ENCODE measurements at regions of chr5 and their contacts with region 1.

Region 1: DNA sequence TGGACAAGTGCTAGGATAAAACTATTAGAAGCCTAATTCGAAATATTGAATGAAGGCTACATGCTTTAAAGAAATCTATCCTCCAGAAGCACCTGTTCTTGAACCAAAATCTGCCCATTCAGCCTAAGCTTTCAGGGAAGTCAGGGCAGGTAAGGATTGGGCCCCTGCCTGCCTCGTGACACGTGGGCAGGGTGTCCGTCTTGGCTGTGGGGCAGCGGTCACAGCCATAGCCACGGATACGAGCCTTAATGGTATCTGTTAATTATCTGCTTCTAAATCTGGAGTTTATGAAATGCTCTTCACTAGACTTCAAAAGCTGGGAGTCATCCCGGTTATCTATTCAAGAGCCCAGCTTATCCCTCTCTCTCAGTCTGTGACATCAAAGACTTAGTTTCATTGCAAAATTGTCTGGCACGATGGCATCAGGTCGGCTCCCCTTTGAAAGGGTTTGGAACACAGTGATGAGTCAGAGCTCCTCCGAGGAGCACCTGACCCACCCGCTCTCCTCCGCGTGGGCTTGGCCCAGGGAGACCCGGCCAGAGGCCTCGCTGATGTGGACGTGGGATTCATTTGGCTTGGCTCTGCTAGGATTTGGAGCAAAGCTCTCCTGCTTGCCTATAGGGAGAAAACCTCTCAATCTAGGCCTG is 135.9 kb downstream of the MACROH2A1 start:
- DNase-seq: peak; percentile 98
- ATAC-seq: peak; percentile 88
- H3K4me3 ChIP-seq: peak overlapping the region; percentile 11 to 60 (median 54); a peak in 5 of 6 replicates
- H3K27ac ChIP-seq: peak overlapping the region; percentile 68
- H3K4me1 ChIP-seq: peaks cover 52% of the 10 kb centered on the region
- H3K27me3 ChIP-seq: no peaks in the 10 kb centered on the region
- CTCF ChIP-seq: no peak
- EP300 ChIP-seq: peak; percentile 89 to 96; a peak in 3 of 4 replicates
- POLR2A ChIP-seq: peak in 1 of 2 experiments; percentile 94; a peak in 2 of 4 replicates
- RAD21 ChIP-seq: no peak

Region 2: DNA sequence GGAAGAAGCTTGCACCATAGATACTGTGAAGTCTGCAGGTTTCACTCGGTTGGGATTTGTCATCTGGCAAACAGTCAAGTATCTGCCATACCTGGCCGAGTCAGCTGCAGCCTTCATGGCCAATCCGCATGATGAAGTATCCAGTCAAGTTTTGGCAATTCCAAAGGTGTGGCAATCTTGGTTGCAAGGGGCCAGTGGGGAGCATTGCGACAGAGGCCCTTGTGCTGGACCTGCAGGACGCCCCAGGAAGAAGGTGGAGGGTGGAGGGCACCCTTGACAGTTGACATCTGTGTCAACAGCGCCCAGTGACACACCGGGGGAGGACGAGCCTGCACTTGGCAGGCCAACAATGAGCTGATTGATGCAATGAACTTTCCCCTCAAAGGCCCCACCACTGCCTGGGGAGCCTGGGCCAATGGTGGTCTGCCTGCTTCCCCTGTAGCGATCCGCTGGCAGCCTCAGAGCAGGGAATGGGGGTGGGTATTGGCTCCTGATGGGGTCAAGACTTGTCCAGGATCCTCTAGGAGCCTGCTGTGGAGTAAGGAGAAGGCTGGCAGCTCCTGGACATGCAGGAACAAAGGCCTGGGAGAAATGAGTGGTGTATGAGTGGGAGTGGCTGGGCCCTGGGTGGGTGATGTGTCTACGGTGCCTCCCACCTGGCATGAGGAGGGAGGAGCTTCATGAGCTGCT is 106.3 kb before region 1 on chr5:
- CTCF ChIA-PET with region 1: no interaction called
- POLR2A ChIA-PET with region 1: interaction called, 13 read pairs
- in situ Hi-C with region 1: no loop called
- intact Hi-C with region 1: no loop called
- DNase-seq: peak; percentile 98
- ATAC-seq: peak; percentile 95
- H3K4me3 ChIP-seq: peak overlapping the region; percentile 24 to 68 (median 25); a peak in 5 of 6 replicates
- H3K27ac ChIP-seq: peak overlapping the region; percentile 97
- H3K4me1 ChIP-seq: peaks cover 79% of the 10 kb centered on the region
- H3K27me3 ChIP-seq: no peaks in the 10 kb centered on the region
- CTCF ChIP-seq: peak; percentile 24; the same call in 1 of the 2 replicates
- EP300 ChIP-seq: peak; percentile 91 to 97
- POLR2A ChIP-seq: peak; percentile 51 to 83
- RAD21 ChIP-seq: 0 out of 2 replicates have a peak, but pooled peaks have one; percentile 36

Region 3: GRCh38 chr5:135235551-135236227 is 27.5 kb before region 1 on chr5:
- CTCF ChIA-PET with region 1: no interaction called
- POLR2A ChIA-PET with region 1: interaction called, 12 read pairs
- in situ Hi-C with region 1: no loop called
- intact Hi-C with region 1: no loop called
- DNase-seq: no peak
- ATAC-seq: no peak
- H3K4me3 ChIP-seq: no peak overlapping the region
- H3K27ac ChIP-seq: no peak overlapping the region
- H3K4me1 ChIP-seq: peaks cover 38% of the 10 kb centered on the region
- H3K27me3 ChIP-seq: no peaks in the 10 kb centered on the region
- CTCF ChIP-seq: no peak
- EP300 ChIP-seq: no peak
- POLR2A ChIP-seq: no peak
- RAD21 ChIP-seq: no peak

Region 4: GRCh38 chr5:135304352-135305165 is 41.4 kb after region 1 on chr5:
- CTCF ChIA-PET with region 1: no interaction called
- POLR2A ChIA-PET with region 1: interaction called, 15 read pairs
- in situ Hi-C with region 1: no loop called
- intact Hi-C with region 1: loop called (anchors 5 kb)
- DNase-seq: peak; percentile 83
- ATAC-seq: peak; percentile 79
- H3K4me3 ChIP-seq: peak overlapping the region in 1 of 3 experiments; percentile 19; a peak in 1 of 6 replicates
- H3K27ac ChIP-seq: peak overlapping the region; percentile 63
- H3K4me1 ChIP-seq: peaks cover 64% of the 10 kb centered on the region
- H3K27me3 ChIP-seq: no peaks in the 10 kb centered on the region
- CTCF ChIP-seq: peak; percentile 41
- EP300 ChIP-seq: peak; percentile 69 to 82; a peak in 3 of 4 replicates
- POLR2A ChIP-seq: no peak
- RAD21 ChIP-seq: 0 out of 2 replicates have a peak, but pooled peaks have one; percentile 32

Region 5: DNA sequence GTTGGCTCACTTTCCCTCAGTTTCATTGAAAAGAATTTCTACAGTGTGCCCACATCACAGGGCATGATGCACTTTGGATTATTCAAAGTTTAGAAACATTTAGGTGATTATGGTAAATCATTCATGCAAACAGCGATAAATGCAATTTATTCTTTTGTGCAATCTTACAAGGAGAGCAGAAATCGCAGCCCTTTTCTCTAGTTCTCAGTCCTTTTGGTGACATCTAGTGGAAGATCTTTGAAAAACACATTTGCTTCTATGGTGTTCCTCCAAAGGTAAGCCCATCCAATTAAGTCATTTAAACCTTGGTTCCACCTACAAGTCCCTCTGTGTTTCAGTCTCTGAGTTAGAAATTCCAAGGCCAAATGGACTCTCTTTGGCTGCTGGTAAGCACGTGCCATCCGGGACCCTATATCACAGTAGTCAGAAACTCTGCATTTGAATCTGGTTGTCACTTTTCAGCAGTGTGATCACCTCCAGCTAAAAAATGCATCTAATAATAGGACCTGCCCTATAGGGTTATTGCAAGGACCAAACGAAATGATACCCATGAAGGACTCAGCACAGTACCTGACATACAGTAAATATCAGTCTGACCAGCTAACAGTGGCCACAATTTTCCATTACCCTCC is 69.5 kb after region 1 on chr5:
- CTCF ChIA-PET with region 1: no interaction called
- POLR2A ChIA-PET with region 1: interaction called, 5 read pairs
- in situ Hi-C with region 1: no loop called
- intact Hi-C with region 1: loop called (anchors 2 kb)
- DNase-seq: peak; percentile 59
- ATAC-seq: no peak
- H3K4me3 ChIP-seq: no peak overlapping the region
- H3K27ac ChIP-seq: no peak overlapping the region
- H3K4me1 ChIP-seq: peaks cover 35% of the 10 kb centered on the region
- H3K27me3 ChIP-seq: no peaks in the 10 kb centered on the region
- CTCF ChIP-seq: peak; percentile 78
- EP300 ChIP-seq: no peak
- POLR2A ChIP-seq: no peak
- RAD21 ChIP-seq: 0 out of 2 replicates have a peak, but pooled peaks have one; percentile 44

Region 6: GRCh38 chr5:135398853-135399523 is 135.8 kb after region 1 on chr5 and contains the start of gene MACROH2A1:
- CTCF ChIA-PET with region 1: no interaction called
- POLR2A ChIA-PET with region 1: no interaction called
- in situ Hi-C with region 1: no loop called
- intact Hi-C with region 1: no loop called
- DNase-seq: peak; percentile 72
- ATAC-seq: peak; percentile 86
- H3K4me3 ChIP-seq: peak within 1 kb of the TSS; percentile 84 to 99 (median 91)
- H3K27ac ChIP-seq: peak within 1 kb of the TSS; percentile 79
- H3K4me1 ChIP-seq: peaks cover 62% of the 10 kb centered on the region
- H3K27me3 ChIP-seq: no peaks in the 10 kb centered on the region
- CTCF ChIP-seq: no peak
- EP300 ChIP-seq: peak; percentile 30 to 47; a peak in 2 of 4 replicates
- POLR2A ChIP-seq: peak; percentile 72 to 87
- RAD21 ChIP-seq: peak; percentile 55
- total RNA-seq, gene MACROH2A1: 141 and 158 TPM in 2 replicates